ENCODE measurements at regions of chr16 and their contacts with region 1.

Region 1: GRCh38 chr16:89700100-89700648 is 1.3 kb downstream of the SPATA2L start:
- DNase-seq: peak; percentile 96
- H3K4me3 Mint-ChIP-seq: peak overlapping the region; percentile 75
- H3K27ac Mint-ChIP-seq: peak overlapping the region; percentile 84
- H3K4me1 Mint-ChIP-seq: peaks cover 6% of the 10 kb centered on the region
- H3K27me3 Mint-ChIP-seq: no peaks in the 10 kb centered on the region

Region 2: GRCh38 chr16:89686520-89687091 is 13.6 kb before region 1 on chr16 and contains the start of gene CDK10:
- intact Hi-C with region 1: loop called (anchors 1 kb)
- DNase-seq: peak; percentile 91
- H3K4me3 Mint-ChIP-seq: peak within 1 kb of the TSS; percentile 94
- H3K27ac Mint-ChIP-seq: peak within 1 kb of the TSS; percentile 93
- H3K4me1 Mint-ChIP-seq: peaks cover 6% of the 10 kb centered on the region
- H3K27me3 Mint-ChIP-seq: no peaks in the 10 kb centered on the region
- total RNA-seq, gene CDK10: 93.9 and 99.6 TPM in 2 replicates

Region 3: GRCh38 chr16:89815639-89816348 is 115.6 kb after region 1 on chr16:
- intact Hi-C with region 1: loop called (anchors 1 kb)
- DNase-seq: no peak
- H3K4me3 Mint-ChIP-seq: peak overlapping the region; percentile 86
- H3K27ac Mint-ChIP-seq: peak overlapping the region; percentile 58
- H3K4me1 Mint-ChIP-seq: peaks cover 26% of the 10 kb centered on the region
- H3K27me3 Mint-ChIP-seq: no peaks in the 10 kb centered on the region

Region 4: GRCh38 chr16:89860747-89861304 is 160.7 kb after region 1 on chr16:
- intact Hi-C with region 1: loop called (anchors 1 kb)
- DNase-seq: peak; percentile 71
- H3K4me3 Mint-ChIP-seq: no peak overlapping the region
- H3K27ac Mint-ChIP-seq: no peak overlapping the region
- H3K4me1 Mint-ChIP-seq: peaks cover 33% of the 10 kb centered on the region
- H3K27me3 Mint-ChIP-seq: no peaks in the 10 kb centered on the region

Region 5: DNA sequence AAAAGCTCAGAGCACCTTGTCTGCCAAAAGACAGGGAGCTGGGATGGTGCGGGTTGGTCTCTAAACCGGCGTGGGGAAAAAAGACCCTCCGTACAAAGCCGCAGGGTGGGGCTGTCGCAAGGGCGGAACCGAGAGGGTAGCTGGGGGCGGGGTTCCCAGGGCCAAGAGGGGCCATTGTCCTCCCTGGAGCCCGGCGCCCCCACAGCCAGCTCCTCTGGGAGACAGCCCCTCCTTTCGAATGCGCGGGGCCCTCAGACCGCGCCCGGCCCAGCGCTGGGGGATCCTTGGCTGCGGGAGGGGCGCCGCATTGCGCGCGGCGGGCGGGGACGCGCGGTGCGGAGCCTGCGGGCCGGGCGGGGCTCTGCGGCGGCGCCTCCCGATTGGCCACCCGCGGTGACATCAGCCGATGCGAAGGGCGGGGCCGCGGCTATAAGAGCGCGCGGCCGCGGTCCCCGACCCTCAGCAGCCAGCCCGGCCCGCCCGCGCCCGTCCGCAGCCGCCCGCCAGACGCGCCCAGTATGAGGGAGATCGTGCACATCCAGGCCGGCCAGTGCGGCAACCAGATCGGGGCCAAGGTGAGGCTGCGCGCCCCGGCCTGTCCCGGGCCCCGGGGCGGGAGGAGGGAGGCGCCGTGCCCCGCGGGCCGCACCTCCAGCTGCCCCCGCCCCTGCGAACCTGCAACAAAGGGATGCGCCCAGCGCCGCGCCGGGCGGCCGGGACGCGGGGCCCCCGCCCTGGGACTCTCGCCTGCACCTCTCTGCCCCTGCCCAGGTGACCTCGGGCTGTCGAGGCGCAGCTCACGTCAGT is 222.9 kb after region 1 on chr16 and contains the start of gene TUBB3:
- intact Hi-C with region 1: loop called (anchors 5 kb)
- DNase-seq: peak; percentile 69
- H3K4me3 Mint-ChIP-seq: peak within 1 kb of the TSS; percentile 83
- H3K27ac Mint-ChIP-seq: peak within 1 kb of the TSS; percentile 15
- H3K4me1 Mint-ChIP-seq: peaks cover 7% of the 10 kb centered on the region
- H3K27me3 Mint-ChIP-seq: peaks cover 29% of the 10 kb centered on the region
- total RNA-seq, gene TUBB3: 2.0 and 2.6 TPM in 2 replicates

Region 6: DNA sequence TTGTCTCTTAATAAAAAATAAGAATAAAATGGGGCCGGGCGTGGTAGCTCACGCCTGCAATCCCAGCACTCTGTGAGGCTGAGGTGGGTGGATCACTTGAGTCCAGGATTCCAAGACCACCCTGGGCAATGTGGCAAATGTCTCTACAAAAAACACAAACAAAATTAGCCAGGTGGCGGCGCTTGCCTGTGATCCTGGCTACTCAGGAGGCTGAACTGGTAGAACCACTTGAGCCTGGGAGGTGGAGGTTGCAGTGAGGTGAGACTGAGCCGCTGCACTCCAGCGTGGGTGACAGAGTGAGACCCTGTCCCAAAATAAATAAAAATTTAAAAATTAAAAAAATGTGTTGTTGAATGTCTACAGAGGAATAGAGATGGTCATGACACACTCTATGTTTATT is 245.5 kb after region 1 on chr16:
- intact Hi-C with region 1: no loop called
- DNase-seq: no peak
- H3K4me3 Mint-ChIP-seq: no peak overlapping the region
- H3K27ac Mint-ChIP-seq: no peak overlapping the region
- H3K4me1 Mint-ChIP-seq: no peaks in the 10 kb centered on the region
- H3K27me3 Mint-ChIP-seq: peaks cover 46% of the 10 kb centered on the region